Transverse colon (tissue), 4 donors: ENCODE measurements at regions of chr21 and their contacts with region 1.

Region 1: GRCh38 chr21:30227633-30228404 is 11.9 kb upstream of the CLDN8 start:
- DNase-seq: no peak
- H3K4me3 ChIP-seq: no peak overlapping the region
- H3K27ac ChIP-seq: peak overlapping the region in 3 of 4 donors; percentile 7 to 40 (median 8)
- H3K4me1 ChIP-seq: peaks cover 0 to 27% (median 9%) of the 10 kb centered on the region in 4 donors
- H3K27me3 ChIP-seq: no peaks in the 10 kb centered on the region
- CTCF ChIP-seq: no peak
- EP300 ChIP-seq: no peak
- POLR2A ChIP-seq: no peak

Region 2: DNA sequence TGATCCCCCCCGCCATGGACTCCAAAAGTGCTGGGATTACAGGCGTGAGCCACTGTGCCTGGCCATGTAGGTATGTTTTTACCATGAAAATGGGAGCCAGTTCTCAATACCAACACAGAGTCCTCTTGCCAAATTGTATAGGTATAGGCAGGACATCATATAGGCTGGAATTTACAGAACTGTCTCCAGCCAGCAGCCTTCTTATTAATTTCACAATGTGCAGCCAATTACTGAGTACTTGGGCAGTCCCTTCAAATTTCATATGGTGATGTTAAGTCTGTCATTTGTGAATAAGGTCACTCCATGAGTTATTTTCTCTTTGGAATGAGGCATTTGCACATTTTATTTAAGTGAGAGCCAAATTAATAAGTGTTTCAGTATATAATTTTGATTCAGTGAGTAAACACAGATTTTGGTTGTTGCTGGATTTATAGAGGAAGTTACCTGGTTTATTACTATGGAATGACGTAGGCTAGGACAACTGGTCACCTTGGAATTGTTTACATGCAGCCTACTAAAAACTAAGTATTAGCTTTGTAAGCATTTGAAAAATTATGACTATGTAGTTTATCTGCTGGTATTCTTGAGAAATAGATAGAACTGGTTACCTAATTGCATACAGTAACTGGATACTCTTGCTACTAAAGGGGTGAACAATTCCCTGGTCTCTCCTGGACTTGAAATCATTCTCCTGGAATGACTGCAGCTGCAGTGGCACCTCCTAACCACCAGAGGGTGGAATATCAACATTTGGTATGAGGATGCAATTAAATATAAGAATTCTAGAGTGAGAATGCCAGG is 112.8 kb after region 1 on chr21:
- in situ Hi-C with region 1: loop called in 1 of 4 experiments (anchors 25 kb)
- intact Hi-C with region 1: no loop called
- DNase-seq: peak; percentile 41
- H3K4me3 ChIP-seq: no peak overlapping the region
- H3K27ac ChIP-seq: no peak overlapping the region
- H3K4me1 ChIP-seq: no peaks in the 10 kb centered on the region
- H3K27me3 ChIP-seq: no peaks in the 10 kb centered on the region
- CTCF ChIP-seq: peak; percentile 71 to 88 (median 74)
- EP300 ChIP-seq: no peak
- POLR2A ChIP-seq: no peak